AG04450 (cell line): ENCODE measurements at regions of chr1 and their contacts with region 1.

Region 1: DNA sequence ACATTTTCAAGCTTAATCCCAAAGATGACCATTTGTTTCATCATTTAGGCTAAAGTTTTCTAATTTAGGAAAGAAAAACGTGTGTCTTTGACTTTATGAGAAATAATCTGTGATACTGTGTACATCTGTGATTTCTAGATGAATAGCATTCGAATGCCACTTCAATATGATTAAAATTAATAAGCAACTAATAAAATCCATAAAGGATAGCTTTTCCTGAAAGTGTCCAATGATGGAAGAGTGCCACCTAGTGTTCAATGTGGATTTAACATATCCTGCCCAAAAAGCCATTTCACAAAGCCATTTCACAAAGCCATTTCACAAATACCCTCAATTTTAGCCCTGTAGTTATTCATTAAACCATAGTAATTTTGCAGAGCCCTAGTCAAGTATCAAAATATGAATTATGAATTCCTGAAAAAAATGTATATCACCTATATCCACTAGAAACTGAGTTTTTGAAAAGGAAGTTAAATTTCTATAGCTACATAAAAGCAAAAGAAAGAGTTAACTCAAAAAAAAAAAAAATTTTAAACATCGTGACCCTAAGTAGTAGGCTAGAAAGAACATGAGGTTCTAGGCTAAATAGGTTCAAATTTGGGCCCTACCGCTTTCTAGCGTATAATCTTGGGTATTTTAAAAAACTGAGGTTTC is 19.1 kb downstream of the NME7 start:
- DNase-seq: peak; percentile 27
- H3K4me3 ChIP-seq: no peak overlapping the region
- H3K27ac ChIP-seq: no peak overlapping the region
- H3K27me3 ChIP-seq: no peaks in the 10 kb centered on the region
- CTCF ChIP-seq: peak; percentile 73

Region 2: DNA sequence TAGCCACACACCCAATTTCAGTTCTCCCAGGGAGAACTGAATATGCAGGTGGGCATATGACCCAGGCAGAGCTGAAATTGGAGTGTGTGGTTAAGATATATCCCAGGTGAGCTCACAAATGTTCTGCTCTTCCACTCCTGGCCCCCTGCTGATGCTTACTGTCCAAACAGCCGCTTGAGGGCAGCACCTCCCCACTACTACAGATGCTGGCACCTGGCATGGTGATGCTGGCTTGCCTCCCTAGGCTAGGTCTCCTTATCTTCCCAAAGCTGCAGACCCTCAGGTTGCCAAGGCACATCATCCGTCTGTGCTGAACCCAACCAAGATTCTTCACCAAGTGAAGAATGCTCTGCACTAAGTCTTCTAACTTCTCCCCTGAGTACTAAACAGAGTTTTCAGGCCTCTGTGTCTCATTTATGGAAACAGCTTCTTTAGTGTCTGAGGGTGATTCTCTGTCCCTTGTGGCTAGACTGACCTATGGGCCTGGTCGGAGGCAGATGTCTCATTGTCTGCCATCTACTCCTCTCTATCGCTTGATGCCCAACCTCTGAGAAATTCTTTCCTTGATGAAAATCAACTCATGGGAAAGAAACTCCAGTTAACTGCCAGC is 744.9 kb before region 1 on chr1:
- CTCF ChIA-PET with region 1: interaction called, 111 read pairs
- POLR2A ChIA-PET with region 1: no interaction called
- DNase-seq: no peak
- H3K4me3 ChIP-seq: no peak overlapping the region
- H3K27ac ChIP-seq: no peak overlapping the region
- H3K27me3 ChIP-seq: no peaks in the 10 kb centered on the region
- CTCF ChIP-seq: peak; percentile 73

Region 3: DNA sequence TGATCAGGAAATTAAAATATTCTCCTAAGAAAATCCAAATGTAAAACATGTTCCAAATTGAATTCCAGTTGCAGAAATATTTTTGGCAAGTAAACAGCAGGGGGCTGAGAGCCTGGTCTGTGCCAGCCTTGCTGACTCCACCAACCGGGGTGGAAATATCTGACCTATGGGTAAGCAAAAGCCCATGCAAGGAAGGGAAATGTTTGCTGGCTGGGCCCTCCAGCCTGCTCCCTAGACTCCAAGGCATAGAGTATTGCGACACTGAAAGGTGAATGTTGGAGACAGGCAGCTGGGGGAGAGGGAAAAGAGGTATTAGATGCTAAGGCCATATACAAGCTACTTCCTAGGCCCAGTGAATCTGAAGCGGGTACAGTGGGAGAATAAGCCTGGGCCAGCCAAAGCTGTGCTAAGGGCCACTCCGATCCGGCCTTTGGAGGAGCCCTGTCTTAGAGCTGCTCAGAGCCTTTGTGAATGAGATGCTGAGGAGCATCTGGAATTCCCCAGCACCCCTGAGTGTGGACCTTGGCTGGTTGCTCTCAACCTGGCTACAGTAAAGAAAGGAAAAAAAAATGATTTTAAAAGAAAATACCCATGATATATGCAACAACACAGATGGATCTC is 266.9 kb before region 1 on chr1:
- CTCF ChIA-PET with region 1: interaction called, 10 read pairs
- POLR2A ChIA-PET with region 1: no interaction called
- DNase-seq: no peak
- H3K4me3 ChIP-seq: no peak overlapping the region
- H3K27ac ChIP-seq: no peak overlapping the region
- H3K27me3 ChIP-seq: peaks cover 3% of the 10 kb centered on the region
- CTCF ChIP-seq: no peak

Region 4: GRCh38 chr1:169240449-169241237 is 107.9 kb before region 1 on chr1:
- CTCF ChIA-PET with region 1: interaction called, 10 read pairs
- POLR2A ChIA-PET with region 1: no interaction called
- DNase-seq: no peak
- H3K4me3 ChIP-seq: no peak overlapping the region
- H3K27ac ChIP-seq: no peak overlapping the region
- H3K27me3 ChIP-seq: no peaks in the 10 kb centered on the region
- CTCF ChIP-seq: no peak

Region 5: GRCh38 chr1:169367486-169368405 is 19.2 kb after region 1 on chr1 and contains the starts of genes BLZF1 and NME7:
- CTCF ChIA-PET with region 1: interaction called, 80 read pairs
- POLR2A ChIA-PET with region 1: no interaction called
- DNase-seq: peak; percentile 88
- H3K4me3 ChIP-seq: peak within 1 kb of the TSS; percentile 88
- H3K27ac ChIP-seq: peak within 1 kb of the TSS; percentile 80
- H3K27me3 ChIP-seq: no peaks in the 10 kb centered on the region
- CTCF ChIP-seq: no peak
- polyA plus RNA-seq, gene BLZF1: 16.2 and 23.0 TPM in 2 replicates
- polyA plus RNA-seq, gene NME7: 19.7 and 27.3 TPM in 2 replicates

Region 6: DNA sequence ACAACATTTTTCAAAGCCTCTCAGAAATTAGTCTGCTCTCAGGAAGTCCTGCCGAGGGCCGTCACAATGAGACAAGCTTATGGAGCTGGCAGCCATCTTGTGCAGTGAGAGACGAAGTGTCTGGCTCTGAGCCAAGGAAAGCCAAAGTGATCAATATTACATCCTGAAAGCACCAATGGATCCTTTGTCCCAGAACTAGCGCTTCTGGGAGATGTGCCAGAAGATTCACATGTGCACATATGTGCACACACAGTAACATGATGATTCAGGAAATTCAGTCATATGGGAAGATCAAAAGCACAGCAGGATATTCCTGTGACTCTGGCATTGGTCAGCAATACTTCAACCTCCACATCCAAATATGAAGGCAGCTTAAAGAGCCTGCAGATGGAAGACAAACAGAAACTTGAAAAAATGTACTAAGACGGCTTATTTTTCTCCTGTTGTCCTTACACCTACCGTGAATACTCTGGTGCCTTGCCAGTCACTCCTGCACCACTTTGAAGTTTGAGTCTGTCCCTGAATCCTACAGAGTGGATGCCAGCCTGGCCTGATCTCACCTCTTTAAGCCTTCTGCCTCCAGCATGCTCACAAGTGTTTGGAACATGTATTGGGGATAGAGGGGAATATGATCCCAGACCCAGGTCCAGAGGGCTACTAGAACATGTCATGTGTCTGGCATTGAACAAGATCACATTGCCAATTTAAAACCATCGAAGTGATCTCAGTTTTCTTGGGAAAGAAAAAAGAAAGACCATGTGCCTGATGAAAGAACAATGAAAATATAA is 1270.9 kb after region 1 on chr1:
- CTCF ChIA-PET with region 1: no interaction called
- POLR2A ChIA-PET with region 1: no interaction called
- DNase-seq: no peak
- H3K4me3 ChIP-seq: no peak overlapping the region
- H3K27ac ChIP-seq: no peak overlapping the region
- H3K27me3 ChIP-seq: no peaks in the 10 kb centered on the region
- CTCF ChIP-seq: no peak